Caco-2 (cell line): ENCODE measurements at regions of chr10 and their contacts with region 1.

Region 1: DNA sequence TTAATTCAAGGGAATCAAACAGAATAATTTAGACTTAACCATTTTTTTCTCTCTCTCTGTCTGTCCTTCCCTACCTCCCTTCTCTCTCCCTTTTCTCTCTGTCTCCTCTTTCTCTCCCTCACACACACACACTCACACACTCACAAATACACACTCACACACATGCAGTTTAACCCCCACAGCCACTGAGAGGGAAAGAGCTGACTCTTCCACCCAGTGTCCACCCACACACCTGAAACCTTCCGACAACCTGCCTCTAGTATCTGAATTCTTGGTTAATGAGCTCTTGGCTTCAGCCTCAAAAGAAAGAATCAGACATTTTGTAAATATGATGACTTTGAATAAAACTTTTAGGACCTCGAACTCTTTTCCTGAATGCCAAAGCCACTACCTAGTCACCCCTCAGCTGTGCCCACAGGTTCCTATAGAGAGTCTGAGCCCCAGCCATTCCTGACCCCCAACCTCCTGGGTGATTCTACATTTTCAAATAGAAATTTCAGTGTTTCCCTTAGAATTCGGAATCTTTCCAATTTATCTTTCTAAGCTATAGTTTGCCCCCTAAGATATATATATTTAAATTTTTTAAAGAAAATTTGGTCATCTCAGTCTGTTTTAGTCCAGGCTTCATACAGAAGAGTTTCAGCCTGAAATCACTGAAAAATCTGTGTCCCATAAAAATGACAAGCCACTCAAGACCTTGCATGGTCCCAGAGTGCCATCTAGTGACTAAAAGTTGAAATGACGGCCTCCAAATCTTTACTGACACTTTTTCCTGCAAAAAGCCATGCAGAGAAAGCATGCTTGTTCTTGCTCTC is 202.8 kb downstream of the IPMK start:
- DNase-seq: peak in 1 of 2 experiments; percentile 75
- H3K4me3 ChIP-seq: no peak overlapping the region
- H3K4me3 Mint-ChIP-seq: no peak overlapping the region
- H3K27ac Mint-ChIP-seq: no peak overlapping the region
- H3K4me1 ChIP-seq: no peaks in the 10 kb centered on the region
- H3K4me1 Mint-ChIP-seq: no peaks in the 10 kb centered on the region
- H3K27me3 ChIP-seq: no peaks in the 10 kb centered on the region; the same call in 1 of the 2 replicates
- H3K27me3 Mint-ChIP-seq: peaks cover 13% of the 10 kb centered on the region
- CTCF ChIP-seq: peak; percentile 93 to 96

Region 2: DNA sequence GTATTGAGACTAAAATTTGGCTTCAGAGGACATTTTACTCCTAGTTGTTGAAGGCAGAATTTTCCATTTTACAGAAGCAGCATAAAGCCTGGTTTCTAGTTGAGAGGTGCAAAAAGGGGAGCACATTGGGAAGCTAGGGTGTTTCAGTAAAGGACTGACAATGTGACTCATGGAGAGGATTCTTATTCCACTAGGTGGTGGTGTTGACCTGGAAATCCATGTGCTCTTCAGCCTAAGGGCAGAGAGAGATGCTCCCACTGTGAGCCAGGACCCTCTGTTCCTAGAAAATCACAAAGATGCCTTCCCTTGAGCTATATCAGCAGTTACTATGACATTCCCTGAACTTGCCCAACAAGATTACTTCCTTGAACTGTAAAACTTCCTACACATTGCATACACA is 485.0 kb before region 1 on chr10:
- CTCF ChIA-PET with region 1: no interaction called
- POLR2A ChIA-PET with region 1: no interaction called
- intact Hi-C with region 1: loop called (anchors 1 kb)
- DNase-seq: peak in 1 of 2 experiments; percentile 65
- H3K4me3 ChIP-seq: no peak overlapping the region
- H3K4me3 Mint-ChIP-seq: no peak overlapping the region
- H3K27ac Mint-ChIP-seq: no peak overlapping the region
- H3K4me1 ChIP-seq: no peaks in the 10 kb centered on the region
- H3K4me1 Mint-ChIP-seq: no peaks in the 10 kb centered on the region
- H3K27me3 ChIP-seq: no peaks in the 10 kb centered on the region
- H3K27me3 Mint-ChIP-seq: no peaks in the 10 kb centered on the region
- CTCF ChIP-seq: peak; percentile 48 to 61

Region 3: DNA sequence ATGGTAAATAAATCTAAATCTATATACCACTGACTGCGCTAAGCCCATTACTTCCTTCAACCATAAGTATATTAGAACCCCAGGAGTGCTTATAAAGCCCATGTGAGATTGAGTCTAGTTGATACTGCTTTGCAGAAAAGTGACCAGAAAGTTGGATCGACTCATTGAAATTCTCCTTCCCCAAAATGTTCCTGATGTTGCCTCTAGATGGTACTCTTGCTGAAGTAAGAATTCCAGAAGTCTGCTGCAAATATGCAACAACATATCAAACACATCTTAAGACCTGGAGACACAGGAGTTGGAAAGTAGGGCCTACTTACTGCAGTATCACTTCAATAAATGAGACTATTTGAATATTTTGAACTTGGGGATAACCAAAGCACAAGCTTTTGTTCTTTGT is 348.0 kb before region 1 on chr10:
- CTCF ChIA-PET with region 1: no interaction called
- POLR2A ChIA-PET with region 1: no interaction called
- intact Hi-C with region 1: loop called (anchors 1 kb)
- DNase-seq: peak in 1 of 2 experiments; percentile 49
- H3K4me3 ChIP-seq: no peak overlapping the region
- H3K4me3 Mint-ChIP-seq: no peak overlapping the region
- H3K27ac Mint-ChIP-seq: no peak overlapping the region
- H3K4me1 ChIP-seq: no peaks in the 10 kb centered on the region
- H3K4me1 Mint-ChIP-seq: no peaks in the 10 kb centered on the region
- H3K27me3 ChIP-seq: no peaks in the 10 kb centered on the region
- H3K27me3 Mint-ChIP-seq: peaks cover 7% of the 10 kb centered on the region
- CTCF ChIP-seq: peak; percentile 59 to 81

Region 4: DNA sequence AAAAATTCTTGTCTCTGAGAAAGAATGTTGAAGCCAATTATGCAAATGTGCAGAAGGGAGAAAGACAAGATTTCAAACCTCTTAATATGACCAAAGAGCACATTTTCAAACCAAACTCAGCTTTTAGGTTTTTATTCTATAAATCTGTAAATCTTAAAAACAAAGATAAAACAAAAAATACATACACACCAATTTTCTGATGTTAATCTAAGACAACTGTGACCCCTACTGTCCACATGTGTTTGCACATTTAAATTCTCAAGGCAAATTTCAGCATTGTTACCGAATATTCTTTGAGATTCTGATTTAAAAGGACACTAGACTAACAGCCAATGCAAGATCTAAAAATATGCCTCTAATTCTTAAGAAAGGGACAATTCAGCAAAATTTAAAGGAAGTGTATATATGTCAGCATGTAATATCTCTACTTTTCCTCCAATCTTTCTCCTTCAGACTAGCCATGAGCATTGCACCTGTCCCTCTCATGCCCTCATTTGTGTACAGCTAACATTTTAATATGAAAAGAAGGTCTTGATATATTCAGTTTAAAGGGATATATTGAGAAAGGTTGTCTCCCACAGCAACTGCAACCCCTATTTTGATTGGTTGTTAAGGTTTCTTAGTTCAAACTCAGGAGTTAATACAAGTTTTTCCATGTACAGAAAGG is 215.1 kb before region 1 on chr10:
- CTCF ChIA-PET with region 1: no interaction called
- POLR2A ChIA-PET with region 1: no interaction called
- intact Hi-C with region 1: loop called (anchors 2 kb)
- DNase-seq: no peak
- H3K4me3 ChIP-seq: no peak overlapping the region
- H3K4me3 Mint-ChIP-seq: no peak overlapping the region
- H3K27ac Mint-ChIP-seq: no peak overlapping the region
- H3K4me1 ChIP-seq: no peaks in the 10 kb centered on the region
- H3K4me1 Mint-ChIP-seq: no peaks in the 10 kb centered on the region
- H3K27me3 ChIP-seq: no peaks in the 10 kb centered on the region
- H3K27me3 Mint-ChIP-seq: no peaks in the 10 kb centered on the region
- CTCF ChIP-seq: peak; percentile 54 to 62

Region 5: GRCh38 chr10:58115218-58116052 is 50.5 kb after region 1 on chr10:
- CTCF ChIA-PET with region 1: no interaction called
- POLR2A ChIA-PET with region 1: no interaction called
- intact Hi-C with region 1: no loop called
- DNase-seq: no peak
- H3K4me3 ChIP-seq: no peak overlapping the region
- H3K4me3 Mint-ChIP-seq: no peak overlapping the region
- H3K27ac Mint-ChIP-seq: no peak overlapping the region
- H3K4me1 ChIP-seq: no peaks in the 10 kb centered on the region
- H3K4me1 Mint-ChIP-seq: no peaks in the 10 kb centered on the region
- H3K27me3 ChIP-seq: no peaks in the 10 kb centered on the region
- H3K27me3 Mint-ChIP-seq: peaks cover 3% of the 10 kb centered on the region
- CTCF ChIP-seq: no peak